CD8-positive, alpha-beta T cell (primary cell): ENCODE measurements at regions of chr6 and their contacts with region 1.

Region 1: DNA sequence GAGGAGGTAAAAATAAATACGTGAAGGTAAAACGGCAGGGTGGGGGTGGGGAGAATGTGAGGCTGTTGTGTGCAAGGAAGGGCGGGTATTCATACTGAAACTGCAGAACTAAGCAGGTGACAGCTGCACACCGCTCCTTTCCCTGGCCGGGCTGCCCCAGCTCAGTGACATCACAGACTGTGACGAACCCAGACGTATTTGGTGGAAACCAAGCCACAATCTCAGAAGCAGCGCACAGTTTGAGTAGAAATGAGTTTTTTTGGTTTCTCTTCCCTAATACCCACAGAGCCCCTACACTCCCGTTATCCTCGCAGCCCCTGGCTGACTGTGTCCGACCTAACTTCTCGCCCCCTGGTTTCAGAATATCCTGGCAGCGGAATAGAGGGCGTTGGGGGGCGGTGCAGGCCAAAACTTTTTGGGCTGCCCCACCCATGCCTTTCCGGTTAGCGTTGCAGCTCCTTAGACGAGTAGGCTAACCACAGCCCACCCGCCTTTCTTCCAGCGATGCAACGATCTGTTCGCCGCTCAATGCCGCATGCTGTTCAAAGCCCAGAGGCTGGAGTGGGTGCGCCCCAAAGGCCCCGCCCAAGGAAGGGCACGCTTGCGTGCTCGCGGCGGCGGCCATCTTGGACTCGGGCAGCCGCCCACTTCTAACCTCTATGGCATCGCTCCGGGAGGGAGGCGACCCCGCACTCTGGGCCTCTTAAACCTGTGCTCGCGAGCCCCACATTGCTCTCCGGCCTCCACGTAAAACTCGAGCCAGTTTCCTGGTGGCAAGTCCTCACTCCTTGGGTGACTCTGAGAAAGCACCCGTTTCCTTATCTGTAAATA is 9.1 kb downstream of the BAK1 start:
- DNase-seq: peak; percentile 86 to 98 (median 92)
- ATAC-seq: peak; percentile 86
- H3K4me3 ChIP-seq: peak overlapping the region; percentile 57 to 67
- H3K4me3 Mint-ChIP-seq: peak overlapping the region; percentile 92
- H3K27ac ChIP-seq: peak overlapping the region; percentile 93 to 99
- H3K27ac Mint-ChIP-seq: peak overlapping the region; percentile 100
- H3K4me1 ChIP-seq: peaks cover 20% of the 10 kb centered on the region
- H3K4me1 Mint-ChIP-seq: peaks cover 29% of the 10 kb centered on the region
- H3K27me3 ChIP-seq: no peaks in the 10 kb centered on the region
- H3K27me3 Mint-ChIP-seq: no peaks in the 10 kb centered on the region
- CTCF ChIP-seq: no peak

Region 2: GRCh38 chr6:33410050-33410710 is 160.8 kb before region 1 on chr6:
- CTCF ChIA-PET with region 1: no interaction called
- POLR2A ChIA-PET with region 1: interaction called, 5 read pairs
- intact Hi-C with region 1: loop called in 1 of 2 experiments (anchors 1 kb)
- DNase-seq: peak; percentile 93 to 99 (median 99)
- ATAC-seq: peak; percentile 68
- H3K4me3 ChIP-seq: peak overlapping the region; percentile 82 to 95
- H3K4me3 Mint-ChIP-seq: peak overlapping the region; percentile 88
- H3K27ac ChIP-seq: peak overlapping the region; percentile 94 to 96
- H3K27ac Mint-ChIP-seq: peak overlapping the region; percentile 91
- H3K4me1 ChIP-seq: peaks cover 40% of the 10 kb centered on the region
- H3K4me1 Mint-ChIP-seq: peaks cover 47% of the 10 kb centered on the region
- H3K27me3 ChIP-seq: no peaks in the 10 kb centered on the region
- H3K27me3 Mint-ChIP-seq: no peaks in the 10 kb centered on the region
- CTCF ChIP-seq: no peak

Region 3: GRCh38 chr6:33417903-33418689 is 152.9 kb before region 1 on chr6 and contains the start of gene CUTA:
- CTCF ChIA-PET with region 1: no interaction called
- POLR2A ChIA-PET with region 1: interaction called, 8 read pairs
- intact Hi-C with region 1: loop called (anchors 1 to 2 kb)
- DNase-seq: peak; percentile 96 to 100 (median 99)
- ATAC-seq: peak; percentile 87
- H3K4me3 ChIP-seq: peak within 1 kb of the TSS; percentile 68 to 70
- H3K4me3 Mint-ChIP-seq: peak within 1 kb of the TSS; percentile 94
- H3K27ac ChIP-seq: peak within 1 kb of the TSS; percentile 83 to 88
- H3K27ac Mint-ChIP-seq: peak within 1 kb of the TSS; percentile 97
- H3K4me1 ChIP-seq: peaks cover 68% of the 10 kb centered on the region
- H3K4me1 Mint-ChIP-seq: peaks cover 83% of the 10 kb centered on the region
- H3K27me3 ChIP-seq: no peaks in the 10 kb centered on the region
- H3K27me3 Mint-ChIP-seq: no peaks in the 10 kb centered on the region
- CTCF ChIP-seq: peak; percentile 27
- total RNA-seq, gene CUTA: 159 to 177 TPM

Region 4: DNA sequence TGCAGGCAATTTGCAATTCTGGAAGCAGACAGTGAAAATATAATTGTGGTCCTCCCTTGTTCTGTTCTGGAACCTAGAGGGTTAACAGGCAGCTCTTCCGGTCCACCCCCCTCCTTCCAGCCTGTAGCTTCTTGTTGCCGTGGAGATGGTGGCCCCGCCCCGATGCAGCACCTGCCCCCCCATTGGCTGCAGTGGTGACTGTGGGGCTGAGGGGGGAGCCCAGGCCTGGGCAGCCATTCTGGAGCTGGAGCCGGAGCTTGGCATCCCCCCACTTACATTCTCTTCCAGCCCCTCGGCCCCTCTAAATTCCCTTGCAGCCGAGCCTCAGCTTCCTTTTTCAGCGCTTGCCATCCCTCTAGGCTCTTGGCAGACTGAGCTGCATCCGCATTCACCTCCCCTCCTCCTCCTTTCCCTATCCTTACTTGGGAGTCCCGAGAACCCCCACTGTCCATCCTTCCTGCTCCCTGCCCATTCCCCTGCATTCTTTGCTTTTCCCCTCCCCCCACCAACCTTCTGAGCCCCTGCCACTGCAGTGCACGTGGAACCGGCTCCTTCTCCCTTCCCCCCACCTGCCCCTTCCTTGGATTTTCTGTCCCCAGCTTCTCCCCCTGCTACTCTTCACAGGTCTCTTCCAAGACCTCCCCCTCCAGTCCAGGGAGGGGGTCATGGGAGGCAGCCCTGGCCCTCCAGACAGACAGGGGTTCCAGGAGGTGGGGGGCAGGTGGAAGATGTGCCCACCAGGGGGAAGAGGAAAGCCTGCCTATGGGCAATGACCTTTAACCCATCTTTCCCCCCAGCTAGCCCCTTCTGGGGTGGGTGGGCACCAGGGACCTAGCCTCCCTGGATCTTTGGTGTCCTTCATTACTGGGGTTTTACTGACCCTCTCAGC is 139.8 kb before region 1 on chr6:
- CTCF ChIA-PET with region 1: no interaction called
- POLR2A ChIA-PET with region 1: interaction called, 7 read pairs
- intact Hi-C with region 1: loop called in 1 of 2 experiments (anchors 2 kb)
- DNase-seq: peak; percentile 77 to 93 (median 88)
- ATAC-seq: peak; percentile 59
- H3K4me3 ChIP-seq: peak overlapping the region; percentile 38 to 53
- H3K4me3 Mint-ChIP-seq: peak overlapping the region; percentile 93
- H3K27ac ChIP-seq: peak overlapping the region; percentile 53 to 81
- H3K27ac Mint-ChIP-seq: peak overlapping the region; percentile 94
- H3K4me1 ChIP-seq: peaks cover 56% of the 10 kb centered on the region
- H3K4me1 Mint-ChIP-seq: peaks cover 64% of the 10 kb centered on the region
- H3K27me3 ChIP-seq: no peaks in the 10 kb centered on the region
- H3K27me3 Mint-ChIP-seq: no peaks in the 10 kb centered on the region
- CTCF ChIP-seq: no peak

Region 5: DNA sequence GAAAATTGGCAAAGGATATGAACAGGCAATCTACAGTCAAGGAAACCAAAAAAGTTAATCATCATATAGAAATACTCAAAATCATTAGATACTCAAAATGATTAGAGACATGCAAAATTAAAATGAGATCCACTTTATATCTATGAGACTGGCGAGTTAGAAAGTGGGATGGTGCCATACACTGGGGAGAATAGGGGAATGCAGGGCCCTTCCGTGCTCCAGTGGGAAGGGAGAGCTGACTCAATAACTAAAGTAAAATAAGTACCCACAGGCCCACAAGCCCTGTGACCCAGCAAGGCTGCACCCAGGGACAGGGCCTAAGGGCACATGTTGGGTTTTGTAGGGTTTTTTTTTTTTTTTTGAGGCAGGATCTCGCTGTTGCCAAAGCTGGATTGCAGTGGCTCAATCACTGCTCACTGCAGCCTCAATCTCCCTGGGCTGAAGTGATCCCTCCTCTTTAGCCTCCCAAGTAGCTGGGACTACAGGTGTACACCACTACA is 35.9 kb before region 1 on chr6:
- CTCF ChIA-PET with region 1: interaction called, 3 read pairs
- POLR2A ChIA-PET with region 1: interaction called, 17 read pairs
- intact Hi-C with region 1: loop called (anchors 1 kb)
- DNase-seq: no peak
- ATAC-seq: no peak
- H3K4me3 ChIP-seq: no peak overlapping the region
- H3K4me3 Mint-ChIP-seq: no peak overlapping the region
- H3K27ac ChIP-seq: no peak overlapping the region
- H3K27ac Mint-ChIP-seq: no peak overlapping the region
- H3K4me1 ChIP-seq: peaks cover 15% of the 10 kb centered on the region
- H3K4me1 Mint-ChIP-seq: peaks cover 18% of the 10 kb centered on the region
- H3K27me3 ChIP-seq: no peaks in the 10 kb centered on the region
- H3K27me3 Mint-ChIP-seq: no peaks in the 10 kb centered on the region
- CTCF ChIP-seq: no peak

Region 6: DNA sequence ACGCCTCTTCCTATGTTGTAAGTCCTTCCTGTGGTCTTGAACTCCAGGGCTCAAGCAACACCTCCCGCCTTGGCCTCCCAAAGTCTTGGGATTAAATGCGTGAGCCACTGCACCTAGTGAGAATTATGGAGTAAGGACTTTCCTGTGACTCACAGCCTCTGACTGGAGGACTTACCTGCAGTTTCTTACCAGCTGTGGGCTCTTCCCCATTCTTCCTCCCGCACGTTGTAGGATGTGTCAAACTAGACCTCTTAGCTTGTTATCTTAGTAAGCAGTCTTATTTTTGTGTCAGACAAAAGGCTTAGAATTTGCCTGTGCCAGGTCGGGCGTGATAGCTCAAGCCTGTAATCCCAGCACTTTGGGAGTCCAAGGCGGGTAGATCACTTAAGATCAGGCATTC is 21.8 kb before region 1 on chr6:
- CTCF ChIA-PET with region 1: interaction called, 3 read pairs
- POLR2A ChIA-PET with region 1: interaction called, 5 read pairs
- intact Hi-C with region 1: loop called in 1 of 2 experiments (anchors 2 kb)
- DNase-seq: no peak
- ATAC-seq: no peak
- H3K4me3 ChIP-seq: no peak overlapping the region
- H3K4me3 Mint-ChIP-seq: no peak overlapping the region
- H3K27ac ChIP-seq: no peak overlapping the region
- H3K27ac Mint-ChIP-seq: no peak overlapping the region
- H3K4me1 ChIP-seq: peaks cover 14% of the 10 kb centered on the region
- H3K4me1 Mint-ChIP-seq: peaks cover 18% of the 10 kb centered on the region
- H3K27me3 ChIP-seq: no peaks in the 10 kb centered on the region
- H3K27me3 Mint-ChIP-seq: no peaks in the 10 kb centered on the region
- CTCF ChIP-seq: no peak